ENCODE measurements at regions of chr4 and their contacts with region 1.

Region 1: DNA sequence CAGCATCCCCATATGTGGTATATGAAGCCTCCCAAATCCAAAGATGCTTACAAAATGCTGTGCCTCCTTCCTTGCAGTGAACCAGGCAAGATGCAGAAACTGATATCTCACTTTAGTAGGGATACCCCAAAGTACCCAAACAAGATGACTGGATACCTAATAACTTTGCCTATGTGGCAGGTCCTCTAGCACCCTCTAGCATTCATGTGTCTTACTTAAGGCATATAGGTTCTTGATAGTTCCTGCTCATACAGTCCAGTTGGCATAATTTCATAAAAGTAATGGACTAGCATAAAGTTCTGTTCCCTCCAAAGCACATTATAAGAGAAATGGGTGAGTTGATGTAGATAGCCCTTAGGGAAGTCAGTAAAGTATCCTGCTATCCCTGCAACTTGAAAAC is 36.8 kb upstream of the SPP1 start:
- DNase-seq: no peak
- ATAC-seq: no peak
- H3K4me3 ChIP-seq: no peak overlapping the region
- H3K27ac ChIP-seq: no peak overlapping the region
- H3K4me1 ChIP-seq: no peaks in the 10 kb centered on the region
- H3K27me3 ChIP-seq: no peaks in the 10 kb centered on the region
- CTCF ChIP-seq: no peak

Region 2: GRCh38 chr4:87882321-87882720 is 56.4 kb before region 1 on chr4:
- intact Hi-C with region 1: no loop called
- DNase-seq: no peak
- ATAC-seq: no peak
- H3K4me3 ChIP-seq: no peak overlapping the region
- H3K27ac ChIP-seq: no peak overlapping the region
- H3K4me1 ChIP-seq: no peaks in the 10 kb centered on the region
- H3K27me3 ChIP-seq: peaks cover 0 to 2% (median 0%) of the 10 kb centered on the region in 3 donors
- CTCF ChIP-seq: no peak

Region 3: DNA sequence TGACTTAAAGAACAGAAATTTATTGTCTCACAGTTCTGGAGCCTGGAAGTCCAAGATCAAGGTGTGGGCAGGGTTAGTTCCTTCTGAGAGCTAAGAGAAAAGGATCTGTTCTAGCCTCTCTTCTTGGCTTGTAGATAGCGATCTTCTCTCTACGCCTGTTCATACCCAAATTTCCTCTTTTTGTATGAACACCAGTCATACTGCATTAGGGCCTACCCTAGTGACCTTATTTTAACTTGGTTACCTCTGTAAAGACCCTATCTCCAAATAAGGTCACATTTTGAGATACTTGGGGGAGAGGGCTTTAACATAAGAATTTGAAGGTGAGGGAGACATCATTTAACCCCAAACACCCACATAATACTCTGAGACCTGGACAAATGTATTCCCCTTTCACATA is 18.8 kb before region 1 on chr4:
- intact Hi-C with region 1: loop called in 1 of 2 experiments (anchors 2 kb)
- DNase-seq: no peak
- ATAC-seq: no peak
- H3K4me3 ChIP-seq: no peak overlapping the region
- H3K27ac ChIP-seq: no peak overlapping the region
- H3K4me1 ChIP-seq: no peaks in the 10 kb centered on the region
- H3K27me3 ChIP-seq: no peaks in the 10 kb centered on the region
- CTCF ChIP-seq: no peak

Region 4: DNA sequence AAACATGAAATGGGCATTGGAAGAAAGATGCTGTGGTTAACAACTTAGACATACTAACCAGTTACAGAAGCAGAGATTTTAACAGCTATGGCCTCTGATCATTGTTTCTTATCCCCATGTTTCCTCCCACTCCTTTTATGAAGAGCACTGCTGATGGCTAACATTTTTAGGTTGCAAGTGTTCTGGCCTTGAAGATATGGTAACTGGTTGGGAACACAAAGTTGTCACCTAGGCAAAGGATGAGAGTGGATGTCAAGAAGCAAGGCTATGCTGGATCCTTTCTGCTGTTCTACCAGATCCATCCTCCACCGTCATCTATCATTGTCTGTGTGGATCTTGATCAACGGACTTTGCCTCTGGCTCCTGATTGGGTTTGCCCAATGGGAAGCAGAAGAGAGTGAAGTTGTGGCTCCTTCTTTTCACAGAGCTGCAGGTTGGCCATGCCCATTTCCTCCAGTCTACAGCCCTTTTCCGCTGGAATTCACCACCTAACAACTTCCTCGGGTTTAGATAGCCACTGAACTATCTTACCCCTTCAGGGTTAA is 12.1 kb before region 1 on chr4:
- intact Hi-C with region 1: loop called in 1 of 2 experiments (anchors 1 kb)
- DNase-seq: no peak
- ATAC-seq: no peak
- H3K4me3 ChIP-seq: no peak overlapping the region
- H3K27ac ChIP-seq: no peak overlapping the region
- H3K4me1 ChIP-seq: no peaks in the 10 kb centered on the region
- H3K27me3 ChIP-seq: peaks cover 0 to 2% (median 0%) of the 10 kb centered on the region in 3 donors
- CTCF ChIP-seq: no peak

Measured in psoas muscle (tissue), 8 donors.